ENCODE measurements at regions of chr1 and their contacts with region 1.

Region 1: DNA sequence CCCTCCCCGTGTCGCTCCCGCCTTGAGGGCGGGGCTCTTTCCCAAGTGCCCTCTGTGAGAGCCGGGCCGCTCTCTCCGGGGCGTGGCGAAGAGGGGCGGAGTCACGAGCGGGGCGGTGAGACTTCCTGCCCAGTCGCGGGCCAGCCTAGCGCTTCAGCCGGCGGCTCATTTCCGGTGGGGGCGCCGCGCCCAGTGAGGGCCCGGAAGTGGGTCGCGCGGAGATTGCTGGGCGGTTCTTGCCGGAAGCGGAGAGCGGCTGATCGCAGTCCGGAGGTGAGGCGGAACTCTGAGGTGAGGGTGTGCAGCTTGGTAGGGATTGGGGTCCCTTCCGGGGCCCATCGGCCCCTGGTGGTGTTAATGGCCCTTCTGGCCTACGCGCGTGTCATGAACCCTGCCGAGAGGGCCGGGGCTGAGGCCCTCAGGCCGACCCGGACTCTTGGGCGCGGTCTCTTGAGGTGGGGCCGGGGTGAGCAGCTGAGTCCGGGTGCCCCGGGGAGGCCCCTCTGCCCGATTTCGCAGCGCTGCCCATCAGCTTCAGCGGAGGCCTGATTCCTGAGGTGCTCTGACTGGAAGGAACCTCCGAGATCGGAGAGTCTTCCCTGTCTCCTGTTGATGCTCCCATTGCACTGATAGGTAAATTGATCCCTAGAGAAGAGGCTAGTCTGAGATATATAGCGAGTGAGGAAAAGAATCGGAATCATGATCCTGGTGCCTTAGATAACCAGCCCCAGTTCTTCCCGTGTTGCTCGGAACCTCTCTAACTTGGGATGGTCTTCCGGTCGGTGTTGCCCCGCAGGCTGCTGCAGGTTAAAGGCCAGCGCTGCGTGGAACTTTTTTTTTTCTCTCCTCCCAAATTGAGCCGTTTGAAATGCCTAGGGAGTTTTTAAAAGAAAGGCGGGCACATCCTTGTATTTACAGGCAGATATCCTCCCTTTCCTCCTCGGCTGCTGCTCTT is at the start of gene CAP1:
- DNase-seq: peak; percentile 99 to 100 (median 99)
- ATAC-seq: peak; percentile 92
- H3K4me3 ChIP-seq: peak within 1 kb of the TSS; percentile 91
- H3K27ac ChIP-seq: peak within 1 kb of the TSS; percentile 99
- H3K4me1 ChIP-seq: peaks cover 39 to 60% of the 10 kb centered on the region in 2 experiments
- H3K27me3 ChIP-seq: no peaks in the 10 kb centered on the region
- CTCF ChIP-seq: peak in 1 of 3 experiments; percentile 20; a peak in 2 of 6 replicates
- EP300 ChIP-seq: no peak
- POLR2A ChIP-seq: no peak
- RAD21 ChIP-seq: no peak
- polyA plus RNA-seq, gene CAP1: 281 to 658 TPM

Region 2: DNA sequence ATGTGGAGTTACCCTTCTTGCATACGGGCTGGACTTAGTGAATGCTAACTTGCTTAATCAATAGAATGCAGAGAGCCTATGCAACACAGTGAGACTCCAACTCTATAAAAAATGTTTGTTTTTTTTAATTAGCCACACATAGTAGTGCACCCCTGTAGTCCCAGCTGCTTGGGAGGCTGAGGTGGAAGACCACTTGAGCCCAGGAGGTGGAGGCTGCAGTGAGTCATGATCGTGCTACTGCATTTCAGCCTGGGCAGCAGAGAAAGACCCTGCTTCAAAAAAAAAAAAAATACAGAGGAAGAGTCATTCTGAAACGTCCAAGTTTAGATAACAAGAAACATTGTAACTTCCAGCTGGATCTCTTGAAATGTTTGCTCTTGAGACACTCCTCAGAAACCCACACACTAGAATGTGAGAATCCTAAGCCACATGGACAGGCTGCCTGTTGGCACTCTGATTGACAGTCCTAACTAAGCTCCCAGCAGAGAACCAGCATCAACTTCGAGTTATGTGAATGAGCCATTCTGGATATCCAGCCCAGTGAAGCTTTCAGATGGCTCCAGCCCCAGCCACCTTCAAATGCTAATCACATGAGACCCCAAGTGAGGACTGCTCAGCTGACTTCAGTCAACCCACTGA is 20.2 kb before region 1 on chr1:
- CTCF ChIA-PET with region 1: no interaction called
- POLR2A ChIA-PET with region 1: interaction called, 12 read pairs
- in situ Hi-C with region 1: no loop called
- intact Hi-C with region 1: no loop called
- DNase-seq: no peak
- ATAC-seq: no peak
- H3K4me3 ChIP-seq: no peak overlapping the region
- H3K27ac ChIP-seq: no peak overlapping the region
- H3K4me1 ChIP-seq: no peaks in the 10 kb centered on the region
- H3K27me3 ChIP-seq: no peaks in the 10 kb centered on the region; a peak in 1 of 5 replicates
- CTCF ChIP-seq: no peak
- EP300 ChIP-seq: no peak
- POLR2A ChIP-seq: no peak
- RAD21 ChIP-seq: no peak

Region 3: DNA sequence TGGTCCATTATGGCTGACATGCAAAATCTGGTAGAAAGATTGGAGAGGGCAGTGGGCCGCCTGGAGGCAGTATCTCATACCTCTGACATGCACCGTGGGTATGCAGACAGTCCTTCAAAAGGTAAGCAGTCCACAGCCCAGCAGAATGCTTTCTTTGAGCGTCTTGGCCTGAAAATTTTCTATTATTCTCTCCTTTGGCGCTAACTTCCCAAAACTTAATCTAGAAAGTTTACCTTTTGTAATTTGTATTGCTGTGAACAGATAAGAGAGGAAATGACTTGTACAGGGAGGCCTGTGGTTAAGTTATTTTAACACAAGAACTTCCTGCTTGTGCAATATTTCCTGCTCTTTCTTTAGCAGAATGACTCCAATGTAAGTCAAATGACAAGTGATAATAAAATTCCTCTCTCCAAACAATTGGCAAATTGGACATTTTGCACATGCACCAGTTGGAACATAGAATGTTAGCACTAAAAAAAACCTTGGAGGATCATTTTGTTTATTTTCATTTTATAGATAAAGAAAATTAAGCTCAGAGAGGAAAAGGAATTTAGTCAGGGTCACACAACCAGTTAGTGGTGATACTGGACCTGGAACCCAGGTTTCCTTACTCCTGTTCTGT is 18.7 kb after region 1 on chr1:
- CTCF ChIA-PET with region 1: no interaction called
- POLR2A ChIA-PET with region 1: interaction called, 72 read pairs
- in situ Hi-C with region 1: no loop called
- intact Hi-C with region 1: loop called (anchors 1 kb)
- DNase-seq: peak; percentile 36 to 65 (median 46)
- ATAC-seq: peak; percentile 65
- H3K4me3 ChIP-seq: no peak overlapping the region
- H3K27ac ChIP-seq: peak overlapping the region; percentile 92
- H3K4me1 ChIP-seq: peaks cover 24 to 69% of the 10 kb centered on the region in 2 experiments
- H3K27me3 ChIP-seq: no peaks in the 10 kb centered on the region; a peak in 1 of 5 replicates
- CTCF ChIP-seq: peak; percentile 23 to 46 (median 38); a peak in 3 of 6 replicates
- EP300 ChIP-seq: peak; percentile 97
- POLR2A ChIP-seq: no peak
- RAD21 ChIP-seq: 0 out of 4 replicates have a peak, but pooled peaks of 1 of the 2 experiments have one; percentile 2

Region 4: GRCh38 chr1:40197656-40198055 is 156.9 kb after region 1 on chr1:
- CTCF ChIA-PET with region 1: no interaction called
- POLR2A ChIA-PET with region 1: no interaction called
- in situ Hi-C with region 1: no loop called
- intact Hi-C with region 1: no loop called
- DNase-seq: no peak
- ATAC-seq: no peak
- H3K4me3 ChIP-seq: no peak overlapping the region
- H3K27ac ChIP-seq: no peak overlapping the region
- H3K4me1 ChIP-seq: no peaks in the 10 kb centered on the region
- H3K27me3 ChIP-seq: no peaks in the 10 kb centered on the region
- CTCF ChIP-seq: peak in 1 of 3 experiments; percentile 33; a peak in 1 of 6 replicates
- EP300 ChIP-seq: no peak
- POLR2A ChIP-seq: no peak
- RAD21 ChIP-seq: no peak

Region 5: GRCh38 chr1:40802078-40802741 is 761.4 kb after region 1 on chr1:
- CTCF ChIA-PET with region 1: no interaction called
- POLR2A ChIA-PET with region 1: no interaction called
- in situ Hi-C with region 1: no loop called
- intact Hi-C with region 1: no loop called
- DNase-seq: peak; percentile 95 to 100 (median 100)
- ATAC-seq: peak; percentile 93
- H3K4me3 ChIP-seq: peak overlapping the region; percentile 38
- H3K27ac ChIP-seq: peak overlapping the region; percentile 76
- H3K4me1 ChIP-seq: peaks cover 39 to 67% of the 10 kb centered on the region in 2 experiments
- H3K27me3 ChIP-seq: no peaks in the 10 kb centered on the region
- CTCF ChIP-seq: peak in 1 of 3 experiments; percentile 6; a peak in 1 of 6 replicates
- EP300 ChIP-seq: no peak
- POLR2A ChIP-seq: 0 out of 2 replicates have a peak, but pooled peaks have one; percentile 47
- RAD21 ChIP-seq: no peak

Measured in K562 (cell line).